ENCODE measurements at regions of chr6 and their contacts with region 1.

Region 1: DNA sequence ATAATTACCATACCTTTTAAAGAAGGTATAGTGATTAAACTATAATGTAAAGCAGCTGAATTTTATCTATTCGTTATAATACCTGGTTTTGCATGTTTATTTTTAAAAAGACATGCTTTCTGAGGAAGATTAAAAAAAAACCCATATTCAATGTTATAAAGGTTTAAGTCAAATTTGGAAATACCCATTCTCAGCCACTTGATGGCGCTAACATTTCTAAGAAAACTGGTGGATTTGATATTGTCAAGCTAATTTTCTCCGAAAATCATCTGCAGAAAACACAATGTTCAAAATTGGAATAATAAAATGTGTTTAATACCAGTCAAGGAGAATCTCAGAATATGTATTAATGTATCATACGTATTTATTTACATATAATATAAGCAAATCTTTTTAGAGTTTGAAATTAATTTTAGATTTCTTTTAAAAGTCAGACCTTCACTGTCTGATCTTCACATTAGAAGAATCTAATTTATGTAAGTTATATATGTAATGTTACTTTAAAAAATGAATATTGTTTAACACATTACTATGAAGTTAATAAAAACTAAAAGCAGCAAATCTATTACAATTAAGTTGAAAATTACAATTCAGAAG is 35.0 kb downstream of the SHPRH start:
- DNase-seq: no peak
- H3K4me3 Mint-ChIP-seq: no peak overlapping the region
- H3K27ac Mint-ChIP-seq: no peak overlapping the region
- H3K4me1 Mint-ChIP-seq: no peaks in the 10 kb centered on the region
- H3K27me3 Mint-ChIP-seq: no peaks in the 10 kb centered on the region

Region 2: GRCh38 chr6:145963216-145964068 is 34.3 kb after region 1 on chr6:
- CTCF ChIA-PET with region 1: interaction called, 21 read pairs
- POLR2A ChIA-PET with region 1: interaction called, 4 read pairs
- intact Hi-C with region 1: no loop called
- DNase-seq: peak; percentile 60
- H3K4me3 Mint-ChIP-seq: peak overlapping the region; percentile 94
- H3K27ac Mint-ChIP-seq: peak overlapping the region; percentile 85
- H3K4me1 Mint-ChIP-seq: peaks cover 50% of the 10 kb centered on the region
- H3K27me3 Mint-ChIP-seq: no peaks in the 10 kb centered on the region

Region 3: GRCh38 chr6:146135167-146135566 is 206.0 kb after region 1 on chr6:
- CTCF ChIA-PET with region 1: no interaction called
- POLR2A ChIA-PET with region 1: no interaction called
- intact Hi-C with region 1: no loop called
- DNase-seq: no peak
- H3K4me3 Mint-ChIP-seq: no peak overlapping the region
- H3K27ac Mint-ChIP-seq: no peak overlapping the region
- H3K4me1 Mint-ChIP-seq: no peaks in the 10 kb centered on the region
- H3K27me3 Mint-ChIP-seq: no peaks in the 10 kb centered on the region

Region 4: GRCh38 chr6:146700078-146700686 is 771.0 kb after region 1 on chr6:
- CTCF ChIA-PET with region 1: interaction called, 7 read pairs
- POLR2A ChIA-PET with region 1: no interaction called
- intact Hi-C with region 1: loop called (anchors 1 kb)
- DNase-seq: peak; percentile 41
- H3K4me3 Mint-ChIP-seq: no peak overlapping the region
- H3K27ac Mint-ChIP-seq: no peak overlapping the region
- H3K4me1 Mint-ChIP-seq: no peaks in the 10 kb centered on the region
- H3K27me3 Mint-ChIP-seq: no peaks in the 10 kb centered on the region

Region 5: GRCh38 chr6:146770965-146771735 is 842.0 kb after region 1 on chr6:
- CTCF ChIA-PET with region 1: no interaction called
- POLR2A ChIA-PET with region 1: no interaction called
- intact Hi-C with region 1: loop called (anchors 10 kb)
- DNase-seq: peak; percentile 69
- H3K4me3 Mint-ChIP-seq: peak overlapping the region; percentile 60
- H3K27ac Mint-ChIP-seq: no peak overlapping the region
- H3K4me1 Mint-ChIP-seq: peaks cover 22% of the 10 kb centered on the region
- H3K27me3 Mint-ChIP-seq: no peaks in the 10 kb centered on the region